Dorsolateral prefrontal cortex (tissue), 120 donors: ENCODE measurements at regions of chr20 and their contacts with region 1.

Region 1: DNA sequence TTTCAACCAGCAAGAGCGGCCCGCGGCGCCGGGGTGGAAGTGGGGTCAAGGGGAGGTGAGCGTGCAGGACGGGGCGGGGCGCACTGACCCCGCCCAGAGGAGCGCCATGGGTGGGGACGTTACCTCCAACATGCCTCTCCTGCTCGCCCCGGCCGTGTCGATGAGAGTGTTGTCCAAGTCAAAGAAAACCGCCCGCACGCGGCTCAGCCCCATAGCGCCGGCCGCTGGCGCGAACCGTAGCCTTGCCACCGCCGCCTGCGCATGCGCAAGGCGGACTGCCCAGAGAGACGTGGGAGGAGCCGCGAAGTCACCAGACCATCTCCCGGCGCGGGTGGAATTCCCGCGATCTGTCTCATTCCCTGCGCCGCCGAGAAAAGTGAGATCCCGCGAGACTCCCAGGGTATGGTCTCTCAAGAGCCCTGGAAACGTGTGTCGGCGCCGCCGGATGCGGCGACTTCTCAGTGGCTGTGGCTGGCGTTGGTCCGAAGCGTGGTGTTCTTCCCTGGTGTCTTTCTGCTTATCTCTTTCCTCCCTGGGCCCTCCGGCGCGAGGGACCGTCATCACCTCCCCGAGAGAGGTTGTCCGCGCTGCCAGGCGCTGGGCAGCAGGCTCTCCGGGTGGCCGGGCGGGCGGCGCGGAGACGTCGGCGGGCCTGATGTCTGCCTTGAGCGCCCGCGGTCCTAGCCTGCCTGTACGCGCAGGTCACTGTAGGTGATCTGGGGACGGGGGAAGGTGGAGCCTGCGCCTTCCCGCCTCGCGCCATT is at the start of gene NANP:
- DNase-seq: peak; percentile 84 to 97 (median 92)
- H3K4me3 ChIP-seq: peak within 1 kb of the TSS; percentile 65 to 99 (median 92)
- H3K27ac ChIP-seq: peak within 1 kb of the TSS; percentile 13 to 95 (median 85)
- H3K27me3 ChIP-seq: no peaks in the 10 kb centered on the region
- CTCF ChIP-seq: peak in 45 of 56 donors; percentile 8 to 63 (median 35)
- total RNA-seq, gene NANP: 1.2 to 4.5 (median 2.9) TPM

Region 2: DNA sequence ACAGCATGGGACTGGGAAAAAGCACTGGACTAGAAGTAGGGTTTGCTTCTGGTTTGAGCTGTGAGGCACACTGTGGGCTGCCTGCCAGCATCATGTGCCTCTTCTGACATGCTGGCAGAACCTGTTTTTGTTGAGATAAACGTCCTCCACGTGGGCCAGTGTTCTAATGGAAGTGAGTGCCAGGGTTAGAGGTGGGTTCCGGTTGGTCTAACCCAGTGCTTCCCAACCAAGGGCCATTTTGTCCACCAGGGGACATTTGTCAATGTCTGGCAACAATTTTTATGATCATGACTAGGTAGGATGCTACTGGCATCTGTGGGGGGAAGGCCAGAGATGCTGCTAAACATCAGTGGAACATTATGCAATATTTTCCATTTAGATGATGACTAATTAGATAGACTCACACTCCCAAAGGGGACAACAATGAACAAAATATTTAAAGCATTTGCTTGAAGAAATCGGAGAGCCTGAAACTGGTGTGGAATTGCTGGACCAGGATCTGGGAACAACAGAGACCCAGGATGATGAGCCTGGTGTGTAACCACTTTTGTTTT is 623.6 kb before region 1 on chr20:
- intact Hi-C with region 1: loop called in 1 of 2 experiments (anchors 10 kb)
- DNase-seq: peak in 4 of 10 donors; percentile 27 to 59 (median 53)
- H3K4me3 ChIP-seq: no peak overlapping the region
- H3K27ac ChIP-seq: peak overlapping the region in 15 of 59 donors; percentile 1 to 43 (median 21)
- H3K27me3 ChIP-seq: no peaks in the 10 kb centered on the region
- CTCF ChIP-seq: peak in 6 of 56 donors; percentile 8 to 15 (median 14)

Region 3: DNA sequence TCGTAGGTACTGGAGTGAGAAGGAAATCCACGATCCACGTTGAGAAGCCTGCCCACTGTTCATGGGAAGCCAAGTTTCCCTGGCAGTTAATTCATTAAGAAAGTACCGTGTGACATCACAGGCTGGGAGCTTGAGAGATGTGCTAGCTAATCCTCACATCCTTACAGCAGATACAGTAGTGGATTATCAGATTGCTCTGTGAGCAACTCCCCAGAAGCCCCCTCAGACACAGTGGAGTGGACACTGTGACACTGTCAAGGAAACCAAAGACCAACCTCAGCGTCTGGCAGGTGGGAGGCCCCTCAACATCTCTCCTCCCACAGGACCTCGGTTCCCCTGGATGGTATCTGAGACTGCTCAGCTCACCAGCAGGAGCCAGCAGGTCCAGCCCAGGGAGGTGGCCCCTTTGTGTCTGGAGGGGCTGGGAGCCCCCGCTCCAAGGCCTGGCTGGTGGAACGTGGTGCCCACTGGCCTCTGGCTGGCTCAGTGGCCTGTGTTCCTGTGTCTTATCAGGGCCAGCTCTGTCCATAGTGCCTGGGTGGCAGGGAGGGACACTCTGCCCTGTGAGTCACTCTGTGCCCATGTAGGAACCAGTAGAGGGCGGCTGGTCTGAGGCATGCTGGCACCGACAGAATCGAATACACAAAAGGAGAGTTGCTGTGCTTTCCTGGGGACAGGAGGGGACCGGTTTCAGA is 368.8 kb before region 1 on chr20:
- intact Hi-C with region 1: loop called in 1 of 2 experiments (anchors 10 kb)
- DNase-seq: peak in 6 of 10 donors; percentile 58 to 78 (median 68)
- H3K4me3 ChIP-seq: peak overlapping the region in 9 of 59 donors; percentile 0 to 31 (median 8)
- H3K27ac ChIP-seq: peak overlapping the region in 50 of 59 donors; percentile 5 to 94 (median 59)
- H3K27me3 ChIP-seq: no peaks in the 10 kb centered on the region
- CTCF ChIP-seq: peak in 35 of 56 donors; percentile 10 to 62 (median 29)

Region 4: DNA sequence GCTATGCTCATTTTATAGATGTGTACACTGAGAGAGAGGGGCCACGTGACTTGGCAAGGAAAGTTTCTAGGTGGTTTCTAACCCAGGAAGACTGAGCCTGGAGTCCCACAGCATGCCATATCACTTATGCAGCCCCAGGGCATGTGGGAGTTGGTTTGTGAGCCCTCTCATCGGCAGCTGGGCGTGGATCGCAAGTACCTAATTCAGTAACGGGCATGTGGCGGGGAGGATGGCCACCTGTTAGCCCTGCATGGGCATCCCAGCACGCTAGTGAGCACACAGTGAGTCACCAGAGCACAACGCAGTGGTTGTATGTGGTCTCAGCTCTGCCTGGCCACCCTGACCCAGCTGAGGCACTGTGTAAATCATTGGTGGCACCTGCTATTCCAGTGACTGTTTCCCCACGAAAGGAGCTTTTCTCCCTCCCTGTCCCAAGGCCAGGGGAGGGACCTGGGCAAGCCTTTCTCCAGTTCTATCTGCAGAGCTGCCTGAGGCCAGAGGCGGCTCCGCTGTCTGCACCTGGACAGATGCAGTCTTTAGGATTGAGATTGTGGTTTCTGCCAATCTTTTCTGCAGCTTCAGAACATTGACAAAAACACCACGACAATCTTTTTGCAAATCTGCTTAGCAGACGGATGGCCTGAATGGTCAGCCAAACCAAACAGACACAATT is 126.8 kb before region 1 on chr20:
- intact Hi-C with region 1: no loop called
- DNase-seq: no peak
- H3K4me3 ChIP-seq: no peak overlapping the region
- H3K27ac ChIP-seq: no peak overlapping the region
- H3K27me3 ChIP-seq: no peaks in the 10 kb centered on the region
- CTCF ChIP-seq: no peak